Motor neuron (in vitro differentiated cells): ENCODE measurements at regions of chr5 and their contacts with region 1.

Region 1: GRCh38 chr5:112419986-112420864 is 1.1 kb upstream of the EPB41L4A start:
- ATAC-seq: peak; percentile 80 to 95 (median 91)
- H3K4me3 ChIP-seq: peak overlapping the region; percentile 62 to 95 (median 82)
- H3K27ac ChIP-seq: peak overlapping the region in 1 of 2 donors; percentile 42
- H3K4me1 ChIP-seq: peaks cover 3 to 19% of the 10 kb centered on the region in 2 donors

Region 2: DNA sequence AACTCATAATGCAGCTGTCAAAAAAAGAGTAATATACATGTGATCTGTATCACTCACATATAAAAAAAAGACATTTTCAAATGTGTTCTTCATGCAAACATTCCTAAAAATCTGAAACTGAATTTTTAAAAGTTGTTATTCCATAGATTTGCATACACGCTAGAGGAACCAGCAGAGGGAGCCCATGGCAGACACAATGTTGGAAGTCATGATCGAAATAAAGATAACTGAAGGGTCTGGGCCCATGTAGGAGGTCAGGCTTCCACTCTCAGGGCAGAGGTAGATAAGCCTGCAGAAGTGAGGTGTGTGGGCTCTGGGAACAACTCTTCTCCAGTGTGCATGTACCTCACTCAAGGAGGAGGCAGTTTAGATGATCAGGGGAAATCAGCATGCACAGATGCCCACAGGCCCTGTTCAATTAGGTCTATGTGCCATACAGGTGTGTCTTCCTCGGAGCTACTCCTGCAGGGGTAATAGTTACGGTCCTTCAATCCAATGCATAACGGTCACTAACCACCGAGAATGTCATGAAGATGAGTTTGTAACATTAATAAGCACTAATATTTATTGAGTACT is 209.7 kb before region 1 on chr5:
- in situ Hi-C with region 1: loop called in 6 of 9 experiments (anchors 25 kb)
- ATAC-seq: peak in 7 of 8 experiments; percentile 47 to 71 (median 57)
- H3K4me3 ChIP-seq: no peak overlapping the region
- H3K27ac ChIP-seq: no peak overlapping the region
- H3K4me1 ChIP-seq: peaks cover 0 to 10% of the 10 kb centered on the region in 2 donors